Dorsolateral prefrontal cortex (tissue), 120 donors: ENCODE measurements at regions of chr2 and their contacts with region 1.

Region 1: DNA sequence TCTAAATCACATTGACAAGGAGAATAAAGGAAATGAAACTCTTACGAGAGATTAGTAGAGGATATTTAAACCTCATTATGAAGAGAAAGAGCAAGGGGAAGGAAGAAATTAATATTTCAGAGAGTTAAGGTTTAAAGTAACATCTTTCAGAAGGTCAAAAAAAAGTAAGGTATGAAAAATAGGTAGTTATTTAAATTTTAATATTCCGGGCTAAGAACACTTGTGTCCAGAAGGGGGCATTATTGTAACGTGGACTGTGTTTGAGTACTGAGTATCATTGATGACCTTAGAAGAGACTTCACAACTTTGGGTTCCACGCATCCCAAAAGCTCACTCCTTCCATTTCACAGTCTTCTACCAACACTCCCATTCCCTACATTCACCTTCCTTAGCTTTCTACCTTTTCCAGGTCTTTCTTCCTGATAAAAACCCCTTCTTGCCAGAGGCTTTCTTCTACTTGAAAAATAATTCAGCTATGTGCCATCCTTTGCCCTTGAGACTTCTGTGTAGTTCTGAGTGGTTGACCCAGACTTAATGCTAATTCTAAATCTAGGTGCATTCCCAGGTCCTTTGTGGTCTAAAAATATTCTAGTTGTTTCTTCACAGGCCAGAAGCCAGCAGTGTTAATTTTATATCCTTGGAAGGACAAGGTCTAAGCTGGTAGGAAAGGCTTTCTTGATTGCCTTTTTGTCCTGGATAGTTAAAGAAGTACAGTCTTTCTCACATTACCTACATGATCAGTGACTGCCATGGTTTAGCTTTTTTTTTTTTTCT is 16.5 kb downstream of the DYNC1I2 start:
- DNase-seq: no peak
- H3K4me3 ChIP-seq: no peak overlapping the region
- H3K27ac ChIP-seq: peak overlapping the region in 45 of 59 donors; percentile 6 to 73 (median 45)
- H3K27me3 ChIP-seq: no peaks in the 10 kb centered on the region
- CTCF ChIP-seq: peak in 54 of 56 donors; percentile 30 to 73 (median 56)

Region 2: GRCh38 chr2:171598713-171599319 is 104.9 kb before region 1 on chr2:
- intact Hi-C with region 1: loop called in 1 of 2 experiments (anchors 5 kb)
- DNase-seq: peak in 4 of 10 donors; percentile 16 to 60 (median 31)
- H3K4me3 ChIP-seq: peak overlapping the region in 23 of 59 donors; percentile 4 to 50 (median 27)
- H3K27ac ChIP-seq: peak overlapping the region in 4 of 59 donors; percentile 6 to 50 (median 26)
- H3K27me3 ChIP-seq: no peaks in the 10 kb centered on the region
- CTCF ChIP-seq: peak; percentile 59 to 92 (median 83)

Region 3: DNA sequence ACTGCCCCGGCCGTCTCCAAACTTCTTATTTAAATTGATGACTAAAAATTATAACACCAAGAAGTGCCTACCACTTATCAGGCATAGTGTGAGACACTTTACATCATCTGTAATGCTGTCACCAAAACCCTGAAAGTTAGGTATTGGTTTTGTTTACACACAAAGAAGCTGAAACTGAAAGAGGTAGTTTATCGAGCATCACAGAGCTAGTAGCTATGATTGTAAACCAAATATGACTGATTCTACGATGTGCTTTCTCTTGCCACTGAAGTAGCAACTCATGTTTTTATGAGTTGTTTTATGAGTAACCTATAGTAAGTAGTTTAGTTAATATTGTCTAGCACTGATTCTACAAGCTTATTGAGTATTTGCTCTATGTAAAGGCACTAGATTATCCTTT is 15.0 kb after region 1 on chr2:
- intact Hi-C with region 1: no loop called
- DNase-seq: no peak
- H3K4me3 ChIP-seq: no peak overlapping the region
- H3K27ac ChIP-seq: no peak overlapping the region
- H3K27me3 ChIP-seq: no peaks in the 10 kb centered on the region
- CTCF ChIP-seq: no peak

Region 4: DNA sequence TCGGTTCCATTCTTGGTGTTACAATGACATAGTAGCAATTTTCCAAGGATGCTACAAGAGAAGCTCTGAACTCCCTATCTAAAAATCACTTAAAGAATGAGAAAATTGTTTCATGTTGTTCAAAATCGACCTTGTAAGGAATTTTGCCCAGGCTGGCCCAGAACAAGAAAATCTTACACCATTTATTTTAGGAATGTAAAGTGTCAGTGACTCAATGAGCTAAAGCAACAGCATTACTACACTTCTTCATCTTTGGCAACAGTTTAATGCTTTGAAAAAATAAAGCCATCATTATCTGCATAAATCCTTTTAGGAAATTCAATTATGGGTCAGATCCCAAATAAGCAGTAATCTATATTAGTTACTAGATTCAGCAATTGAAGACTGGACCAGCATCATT is 151.6 kb after region 1 on chr2:
- intact Hi-C with region 1: no loop called
- DNase-seq: no peak
- H3K4me3 ChIP-seq: no peak overlapping the region
- H3K27ac ChIP-seq: peak overlapping the region in 8 of 59 donors; percentile 6 to 62 (median 26)
- H3K27me3 ChIP-seq: no peaks in the 10 kb centered on the region
- CTCF ChIP-seq: no peak

Region 5: GRCh38 chr2:171922230-171923022 is 218.7 kb after region 1 on chr2 and contains the start of gene HAT1:
- intact Hi-C with region 1: loop called in 1 of 2 experiments (anchors 10 kb)
- DNase-seq: peak; percentile 95 to 99 (median 98)
- H3K4me3 ChIP-seq: peak within 1 kb of the TSS; percentile 56 to 99 (median 89)
- H3K27ac ChIP-seq: peak within 1 kb of the TSS; percentile 41 to 95 (median 88)
- H3K27me3 ChIP-seq: no peaks in the 10 kb centered on the region
- CTCF ChIP-seq: peak in 19 of 56 donors; percentile 5 to 42 (median 20)
- total RNA-seq, gene HAT1: 13.9 to 33.5 (median 22.1) TPM

Region 6: DNA sequence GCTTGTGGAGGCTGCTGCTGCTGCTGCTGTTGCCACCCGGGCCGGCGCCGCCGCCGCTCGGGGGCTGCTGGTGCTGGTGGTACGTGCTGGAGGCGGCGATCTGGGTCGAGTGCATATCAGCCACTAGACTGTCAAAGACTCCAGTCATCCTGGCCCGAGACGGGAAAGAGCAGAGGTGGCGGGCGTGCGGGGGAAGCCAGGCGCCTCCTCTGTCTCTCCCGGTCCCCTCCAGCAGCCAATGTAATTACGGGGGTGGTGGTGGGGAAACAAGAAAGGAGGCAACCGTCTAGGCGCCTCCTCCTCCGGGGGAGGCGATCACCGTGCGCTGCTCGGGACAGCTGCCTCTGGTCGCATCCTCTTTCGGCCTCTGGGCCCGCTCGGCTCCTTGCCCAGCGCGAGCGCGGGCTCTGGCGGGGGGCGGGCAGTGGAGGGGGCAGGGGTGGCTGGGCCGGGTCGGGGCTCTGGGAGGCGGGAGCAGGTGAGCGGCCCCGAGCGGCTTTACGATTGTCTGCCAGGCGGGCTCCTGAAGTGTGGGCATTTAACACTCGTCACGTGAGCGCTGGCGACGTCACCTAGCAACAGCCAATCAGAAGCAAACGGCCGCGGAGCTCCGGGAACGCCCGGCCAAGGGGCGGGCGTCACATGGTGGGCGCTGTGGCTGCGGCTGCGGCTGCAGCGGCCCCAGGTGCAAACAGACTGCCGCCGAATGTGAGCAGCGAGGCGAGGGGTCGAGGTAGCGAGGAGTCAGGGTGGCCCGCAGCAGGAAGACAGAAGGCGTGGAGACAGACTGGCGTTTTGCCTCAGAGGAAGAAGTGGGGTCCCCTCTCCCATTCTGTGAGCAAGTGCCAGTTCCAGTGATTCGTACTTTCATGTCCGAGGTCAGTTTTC is 398.9 kb after region 1 on chr2 and contains the start of gene DLX2:
- intact Hi-C with region 1: loop called (anchors 5 kb)
- DNase-seq: peak; percentile 53 to 84 (median 78)
- H3K4me3 ChIP-seq: peak within 1 kb of the TSS; percentile 26 to 72 (median 52)
- H3K27ac ChIP-seq: peak within 1 kb of the TSS in 14 of 59 donors; percentile 4 to 57 (median 34)
- H3K27me3 ChIP-seq: peaks cover 33 to 100% (median 100%) of the 10 kb centered on the region in 45 donors
- CTCF ChIP-seq: no peak
- total RNA-seq, gene DLX2: 0.39 to 4.2 (median 1.8) TPM